ENCODE measurements at regions of chr6 and their contacts with region 1.

Region 1: GRCh38 chr6:89080542-89081422 is at the start of gene PNRC1:
- DNase-seq: peak; percentile 96
- ATAC-seq: peak; percentile 85
- H3K4me3 ChIP-seq: peak within 1 kb of the TSS; percentile 93
- H3K27ac ChIP-seq: peak within 1 kb of the TSS; percentile 99
- H3K4me1 ChIP-seq: no peaks in the 10 kb centered on the region
- H3K27me3 ChIP-seq: no peaks in the 10 kb centered on the region
- CTCF ChIP-seq: no peak
- EP300 ChIP-seq: no peak; a peak in 1 of 4 replicates
- POLR2A ChIP-seq: peak; percentile 100
- RAD21 ChIP-seq: no peak
- polyA plus RNA-seq, gene PNRC1: 7.6 to 9.5 TPM

Region 2: DNA sequence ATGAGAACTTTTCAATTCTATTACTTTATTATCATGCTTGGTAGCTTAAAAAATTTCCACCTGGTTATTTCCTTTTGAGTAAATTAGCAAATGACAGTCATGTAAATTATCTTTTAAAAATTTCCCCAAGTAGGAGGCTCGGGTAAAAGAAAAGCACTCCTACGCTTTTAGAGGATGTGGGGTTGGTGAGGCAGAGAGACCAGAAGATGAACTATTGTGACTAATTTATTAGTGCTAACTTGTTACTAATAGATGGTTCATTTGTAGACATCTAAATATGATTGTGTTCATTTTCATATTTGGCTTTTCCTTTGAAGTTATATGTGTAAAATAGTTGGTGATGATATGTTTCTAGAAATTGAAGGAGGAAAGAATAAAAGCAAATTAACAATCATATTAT is 1898.5 kb before region 1 on chr6:
- CTCF ChIA-PET with region 1: no interaction called
- POLR2A ChIA-PET with region 1: interaction called, 10 read pairs
- RAD21 ChIA-PET with region 1: no interaction called
- SMC1A ChIA-PET with region 1: no interaction called
- in situ Hi-C with region 1: no loop called
- intact Hi-C with region 1: no loop called
- DNase-seq: peak; percentile 47
- ATAC-seq: peak; percentile 89
- H3K4me3 ChIP-seq: no peak overlapping the region
- H3K27ac ChIP-seq: peak overlapping the region; percentile 65; the same call in 1 of the 2 replicates
- H3K4me1 ChIP-seq: peaks cover 21% of the 10 kb centered on the region
- H3K27me3 ChIP-seq: no peaks in the 10 kb centered on the region
- CTCF ChIP-seq: no peak
- EP300 ChIP-seq: peak in 1 of 2 experiments; percentile 56; a peak in 1 of 4 replicates
- POLR2A ChIP-seq: no peak
- RAD21 ChIP-seq: no peak

Region 3: DNA sequence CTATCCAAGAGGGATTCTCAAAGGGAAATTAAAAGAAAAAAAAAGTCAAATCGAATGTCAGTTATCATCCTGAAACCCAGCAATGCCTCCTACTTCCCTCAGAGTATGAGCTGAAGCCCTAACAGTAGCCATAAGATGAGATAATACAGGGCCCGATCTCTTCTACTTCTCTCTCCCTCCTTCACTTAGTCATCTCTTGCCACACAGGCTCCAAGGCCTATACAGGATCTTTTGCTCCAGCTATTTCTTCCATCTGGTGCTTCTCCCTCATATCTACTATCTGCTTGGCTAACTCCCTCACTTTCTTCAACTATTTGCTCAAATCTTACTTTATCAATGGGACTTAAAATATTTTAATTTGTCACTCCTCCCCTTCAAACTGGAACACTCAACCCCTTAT is 332.6 kb before region 1 on chr6:
- CTCF ChIA-PET with region 1: no interaction called
- POLR2A ChIA-PET with region 1: no interaction called
- RAD21 ChIA-PET with region 1: no interaction called
- SMC1A ChIA-PET with region 1: no interaction called
- in situ Hi-C with region 1: no loop called
- intact Hi-C with region 1: no loop called
- DNase-seq: no peak
- ATAC-seq: no peak
- H3K4me3 ChIP-seq: no peak overlapping the region
- H3K27ac ChIP-seq: no peak overlapping the region
- H3K4me1 ChIP-seq: no peaks in the 10 kb centered on the region
- H3K27me3 ChIP-seq: no peaks in the 10 kb centered on the region
- CTCF ChIP-seq: no peak
- EP300 ChIP-seq: no peak
- POLR2A ChIP-seq: no peak
- RAD21 ChIP-seq: no peak

Region 4: GRCh38 chr6:88963139-88964090 is 117.4 kb before region 1 on chr6 and contains the start of gene RNGTT:
- CTCF ChIA-PET with region 1: no interaction called
- POLR2A ChIA-PET with region 1: interaction called, 23 read pairs
- RAD21 ChIA-PET with region 1: no interaction called
- SMC1A ChIA-PET with region 1: interaction called, 3 read pairs
- in situ Hi-C with region 1: no loop called
- intact Hi-C with region 1: no loop called
- DNase-seq: peak; percentile 88
- ATAC-seq: peak; percentile 100
- H3K4me3 ChIP-seq: peak within 1 kb of the TSS; percentile 99
- H3K27ac ChIP-seq: peak within 1 kb of the TSS; percentile 80
- H3K4me1 ChIP-seq: no peaks in the 10 kb centered on the region
- H3K27me3 ChIP-seq: no peaks in the 10 kb centered on the region
- CTCF ChIP-seq: no peak
- EP300 ChIP-seq: no peak
- POLR2A ChIP-seq: peak; percentile 89
- RAD21 ChIP-seq: no peak
- polyA plus RNA-seq, gene RNGTT: 7.7 to 11.0 TPM

Region 5: GRCh38 chr6:89098461-89098860 is 17.7 kb after region 1 on chr6:
- CTCF ChIA-PET with region 1: interaction called, 6 read pairs
- POLR2A ChIA-PET with region 1: interaction called, 4 read pairs
- RAD21 ChIA-PET with region 1: interaction called, 4 read pairs
- SMC1A ChIA-PET with region 1: interaction called, 13 read pairs
- in situ Hi-C with region 1: no loop called
- intact Hi-C with region 1: no loop called
- DNase-seq: no peak
- ATAC-seq: peak; percentile 67
- H3K4me3 ChIP-seq: no peak overlapping the region
- H3K27ac ChIP-seq: no peak overlapping the region
- H3K4me1 ChIP-seq: no peaks in the 10 kb centered on the region
- H3K27me3 ChIP-seq: no peaks in the 10 kb centered on the region
- CTCF ChIP-seq: no peak
- EP300 ChIP-seq: no peak
- POLR2A ChIP-seq: no peak
- RAD21 ChIP-seq: no peak

Region 6: GRCh38 chr6:89145787-89146646 is 65.2 kb after region 1 on chr6 and contains the start of gene PM20D2:
- CTCF ChIA-PET with region 1: interaction called, 9 read pairs
- POLR2A ChIA-PET with region 1: interaction called, 71 read pairs
- RAD21 ChIA-PET with region 1: interaction called, 26 read pairs
- SMC1A ChIA-PET with region 1: interaction called, 37 read pairs
- in situ Hi-C with region 1: no loop called
- intact Hi-C with region 1: loop called (anchors 1 kb)
- DNase-seq: no peak
- ATAC-seq: peak; percentile 84
- H3K4me3 ChIP-seq: peak within 1 kb of the TSS; percentile 71
- H3K27ac ChIP-seq: peak within 1 kb of the TSS; percentile 75
- H3K4me1 ChIP-seq: peaks cover 16% of the 10 kb centered on the region
- H3K27me3 ChIP-seq: no peaks in the 10 kb centered on the region
- CTCF ChIP-seq: no peak
- EP300 ChIP-seq: no peak
- POLR2A ChIP-seq: peak; percentile 86
- RAD21 ChIP-seq: no peak
- polyA plus RNA-seq, gene PM20D2: 7.8 to 8.3 TPM

Region 7: DNA sequence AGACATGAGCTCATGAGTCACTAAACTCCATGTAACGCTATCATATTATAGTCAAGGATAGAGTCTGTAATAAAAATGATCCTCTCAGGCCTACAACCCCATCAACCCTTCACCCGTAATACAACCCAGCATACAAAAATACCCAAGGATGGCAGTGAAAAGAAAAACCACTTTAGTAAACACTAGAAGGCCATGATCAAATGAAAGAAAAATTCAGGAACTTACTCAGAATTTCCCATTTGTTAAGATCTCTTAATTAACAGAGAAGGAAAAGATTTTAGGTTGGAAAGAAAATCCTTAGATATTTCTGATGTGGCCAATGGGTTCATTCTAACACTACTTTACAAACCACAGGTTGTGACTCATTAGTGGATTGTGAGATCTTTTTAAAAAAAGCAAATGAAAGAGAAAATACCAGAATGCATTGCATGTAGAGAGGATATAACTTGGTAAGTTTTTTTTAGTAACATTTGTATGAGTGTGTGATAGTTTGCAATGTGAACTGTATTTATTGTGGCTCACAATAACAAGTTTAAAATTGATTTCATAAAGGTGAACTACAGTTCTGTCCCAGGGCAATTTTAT is 279.7 kb after region 1 on chr6:
- CTCF ChIA-PET with region 1: interaction called, 5 read pairs
- POLR2A ChIA-PET with region 1: interaction called, 10 read pairs
- RAD21 ChIA-PET with region 1: interaction called, 6 read pairs
- SMC1A ChIA-PET with region 1: interaction called, 21 read pairs
- in situ Hi-C with region 1: no loop called
- intact Hi-C with region 1: loop called (anchors 2 kb)
- DNase-seq: no peak
- ATAC-seq: peak; percentile 77
- H3K4me3 ChIP-seq: peak overlapping the region; percentile 10; the same call in 1 of the 2 replicates
- H3K27ac ChIP-seq: peak overlapping the region; percentile 90
- H3K4me1 ChIP-seq: peaks cover 64% of the 10 kb centered on the region
- H3K27me3 ChIP-seq: no peaks in the 10 kb centered on the region
- CTCF ChIP-seq: no peak
- EP300 ChIP-seq: peak; percentile 26 to 80; a peak in 2 of 4 replicates
- POLR2A ChIP-seq: no peak
- RAD21 ChIP-seq: no peak